H1 (cell line): ENCODE measurements at regions of chr16 and their contacts with region 1.

Region 1: GRCh38 chr16:22077700-22078313 is 14.5 kb upstream of the VWA3A start:
- DNase-seq: peak in 1 of 2 experiments; percentile 84
- H3K4me3 ChIP-seq: no peak overlapping the region
- H3K27ac ChIP-seq: no peak overlapping the region
- H3K4me1 ChIP-seq: no peaks in the 10 kb centered on the region
- H3K27me3 ChIP-seq: peaks cover 0 to 1% (median 0%) of the 10 kb centered on the region in 4 experiments; a peak in 1 of 7 replicates
- CTCF ChIP-seq: peak; percentile 55 to 79 (median 77)
- EP300 ChIP-seq: no peak
- POLR2A ChIP-seq: no peak
- RAD21 ChIP-seq: peak; percentile 81 to 82

Region 2: GRCh38 chr16:22055878-22056277 is 21.9 kb before region 1 on chr16:
- CTCF ChIA-PET with region 1: interaction called, 38 read pairs
- POLR2A ChIA-PET with region 1: interaction called, 3 read pairs
- DNase-seq: peak in 1 of 2 experiments; percentile 69
- H3K4me3 ChIP-seq: no peak overlapping the region
- H3K27ac ChIP-seq: no peak overlapping the region
- H3K4me1 ChIP-seq: no peaks in the 10 kb centered on the region
- H3K27me3 ChIP-seq: no peaks in the 10 kb centered on the region
- CTCF ChIP-seq: peak; percentile 59 to 70 (median 67)
- EP300 ChIP-seq: no peak
- POLR2A ChIP-seq: no peak
- RAD21 ChIP-seq: peak; percentile 45 to 59

Region 3: GRCh38 chr16:22091758-22092600 is 14.2 kb after region 1 on chr16 and contains the start of gene VWA3A:
- CTCF ChIA-PET with region 1: interaction called, 63 read pairs
- POLR2A ChIA-PET with region 1: interaction called, 4 read pairs
- DNase-seq: peak in 1 of 2 experiments; percentile 64
- H3K4me3 ChIP-seq: no peak within 1 kb of the TSS
- H3K27ac ChIP-seq: peak within 1 kb of the TSS; percentile 60
- H3K4me1 ChIP-seq: peaks cover 0 to 12% (median 3%) of the 10 kb centered on the region in 4 experiments; a peak in 6 of 7 replicates
- H3K27me3 ChIP-seq: no peaks in the 10 kb centered on the region
- CTCF ChIP-seq: no peak
- EP300 ChIP-seq: peak in 1 of 2 experiments; percentile 95; a peak in 2 of 3 replicates
- POLR2A ChIP-seq: no peak
- RAD21 ChIP-seq: no peak
- total RNA-seq, gene VWA3A: not detected in 2 replicates

Region 4: DNA sequence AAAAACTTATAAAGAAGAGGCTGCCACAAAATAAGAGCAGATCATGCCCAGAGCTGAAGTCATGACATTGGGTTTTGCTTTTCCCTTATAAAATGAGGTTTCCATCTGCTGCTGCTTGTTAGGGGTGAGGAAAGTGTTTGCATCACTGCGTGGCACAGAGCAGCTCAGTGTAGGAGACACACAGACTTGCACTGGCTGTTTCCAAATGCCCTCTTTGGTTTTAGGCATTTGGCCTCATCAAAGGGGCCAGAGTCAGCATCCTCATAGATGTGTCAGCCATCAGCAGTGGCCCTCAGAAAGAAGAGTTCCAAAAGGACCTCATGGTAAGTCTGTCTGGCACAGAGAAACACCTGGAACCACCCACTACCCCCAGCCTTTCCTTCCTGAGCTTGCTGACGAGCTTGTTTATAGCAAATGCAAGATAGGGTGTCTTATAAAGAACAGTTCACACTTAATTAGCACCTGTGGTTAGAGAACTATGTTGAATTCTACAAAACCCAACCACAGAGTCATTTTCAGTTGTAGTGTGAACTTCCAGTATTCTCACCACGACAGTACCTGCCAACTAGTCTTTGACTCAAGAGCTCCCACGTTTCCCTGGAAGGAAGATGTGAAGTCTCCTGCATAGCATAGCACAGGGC is 31.6 kb after region 1 on chr16:
- CTCF ChIA-PET with region 1: interaction called, 11 read pairs
- POLR2A ChIA-PET with region 1: no interaction called
- DNase-seq: no peak
- H3K4me3 ChIP-seq: no peak overlapping the region
- H3K27ac ChIP-seq: no peak overlapping the region
- H3K4me1 ChIP-seq: peaks cover 0 to under 1% (median 0%) of the 10 kb centered on the region in 4 experiments; a peak in 1 of 7 replicates
- H3K27me3 ChIP-seq: no peaks in the 10 kb centered on the region
- CTCF ChIP-seq: no peak
- EP300 ChIP-seq: no peak
- POLR2A ChIP-seq: no peak
- RAD21 ChIP-seq: no peak

Region 5: DNA sequence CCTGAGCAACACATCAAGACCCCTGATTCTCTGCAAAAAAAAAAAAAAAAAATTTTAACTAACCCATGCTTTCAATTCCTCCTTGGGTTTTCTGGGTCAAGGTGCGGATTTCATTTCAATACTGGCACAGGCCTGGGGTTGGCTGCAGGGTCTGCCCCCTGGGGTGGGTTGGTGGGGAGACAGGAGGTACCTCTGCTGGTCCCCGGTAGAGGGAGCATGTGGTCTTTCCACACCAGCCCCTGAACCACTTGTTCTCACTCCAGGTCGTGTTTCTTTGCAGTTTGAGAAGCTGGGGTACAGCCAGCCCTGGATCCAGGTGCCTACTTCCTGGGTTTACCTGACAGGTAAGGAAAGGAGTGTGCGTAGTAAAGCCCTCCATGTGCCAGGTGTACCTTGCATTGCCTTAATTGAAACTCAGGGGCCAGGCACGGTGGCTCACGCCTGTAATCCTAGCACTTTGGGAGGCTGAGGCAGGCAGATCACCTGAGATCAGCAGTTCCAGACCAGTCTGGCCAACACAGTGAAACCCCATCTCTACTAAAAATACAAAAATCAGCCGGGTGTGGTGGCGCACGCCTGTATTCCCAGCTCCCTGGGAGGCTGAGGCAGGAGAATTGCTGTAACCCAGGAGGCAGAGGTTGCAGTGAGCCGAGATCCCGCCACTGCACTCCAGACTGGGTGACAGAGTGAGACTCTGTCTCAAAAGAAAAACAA is 106.3 kb after region 1 on chr16:
- CTCF ChIA-PET with region 1: interaction called, 21 read pairs
- POLR2A ChIA-PET with region 1: interaction called, 3 read pairs
- DNase-seq: peak in 1 of 2 experiments; percentile 77
- H3K4me3 ChIP-seq: no peak overlapping the region
- H3K27ac ChIP-seq: no peak overlapping the region
- H3K4me1 ChIP-seq: peaks cover 0 to 4% (median 2%) of the 10 kb centered on the region in 4 experiments; a peak in 3 of 7 replicates
- H3K27me3 ChIP-seq: peaks cover 0 to under 1% (median 0%) of the 10 kb centered on the region in 4 experiments; a peak in 2 of 7 replicates
- CTCF ChIP-seq: peak; percentile 54 to 69 (median 66)
- EP300 ChIP-seq: no peak
- POLR2A ChIP-seq: no peak
- RAD21 ChIP-seq: peak; percentile 28 to 44; a peak in 2 of 4 replicates